HEK293 (cell line): ENCODE measurements at regions of chr9 and their contacts with region 1.

Region 1: GRCh38 chr9:108761655-108762347 is 94.0 kb downstream of the ACTL7B start:
- H3K4me3 ChIP-seq: no peak overlapping the region
- H3K27ac ChIP-seq: no peak overlapping the region
- H3K4me1 ChIP-seq: no peaks in the 10 kb centered on the region
- CTCF ChIP-seq: no peak

Region 2: GRCh38 chr9:108710424-108710823 is 51.4 kb before region 1 on chr9:
- CTCF ChIA-PET with region 1: no interaction called
- POLR2A ChIA-PET with region 1: no interaction called
- H3K4me3 ChIP-seq: no peak overlapping the region
- H3K27ac ChIP-seq: no peak overlapping the region
- H3K4me1 ChIP-seq: no peaks in the 10 kb centered on the region
- CTCF ChIP-seq: no peak

Region 3: GRCh38 chr9:108751369-108751768 is 10.4 kb before region 1 on chr9:
- CTCF ChIA-PET with region 1: interaction called, 13 read pairs
- POLR2A ChIA-PET with region 1: interaction called, 3 read pairs
- H3K4me3 ChIP-seq: no peak overlapping the region
- H3K27ac ChIP-seq: no peak overlapping the region
- H3K4me1 ChIP-seq: no peaks in the 10 kb centered on the region
- CTCF ChIP-seq: no peak

Region 4: GRCh38 chr9:108776920-108777645 is 15.3 kb after region 1 on chr9:
- CTCF ChIA-PET with region 1: interaction called, 11 read pairs
- POLR2A ChIA-PET with region 1: no interaction called
- H3K4me3 ChIP-seq: no peak overlapping the region
- H3K27ac ChIP-seq: no peak overlapping the region
- H3K4me1 ChIP-seq: no peaks in the 10 kb centered on the region
- CTCF ChIP-seq: no peak

Region 5: DNA sequence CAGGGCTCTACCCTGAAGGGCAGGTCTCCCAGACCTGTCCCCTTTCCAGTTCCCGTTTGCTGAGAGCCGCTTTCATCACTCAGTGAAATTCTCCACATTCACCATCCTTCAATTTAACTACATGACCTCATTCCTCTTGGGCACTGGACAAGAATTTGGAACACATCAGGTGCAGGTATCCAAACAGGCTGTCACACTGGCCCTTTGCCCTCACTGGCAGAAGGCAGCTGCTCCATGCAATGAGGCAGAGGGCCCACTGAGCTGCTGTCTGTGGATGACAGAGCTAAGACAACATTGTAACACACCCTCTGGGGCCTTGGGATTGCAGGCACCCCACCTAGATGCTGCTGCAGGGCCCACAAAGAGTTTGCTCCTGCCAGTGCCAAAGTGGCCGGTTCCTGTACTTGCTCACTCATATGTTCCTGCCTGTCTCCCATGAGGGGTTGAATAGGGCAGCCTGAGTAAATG is 38.9 kb after region 1 on chr9:
- CTCF ChIA-PET with region 1: interaction called, 14 read pairs
- POLR2A ChIA-PET with region 1: no interaction called
- H3K4me3 ChIP-seq: no peak overlapping the region
- H3K27ac ChIP-seq: no peak overlapping the region
- H3K4me1 ChIP-seq: no peaks in the 10 kb centered on the region
- CTCF ChIP-seq: no peak